Spleen (tissue), 13 donors: ENCODE measurements at regions of chr2 and their contacts with region 1.

Region 1: DNA sequence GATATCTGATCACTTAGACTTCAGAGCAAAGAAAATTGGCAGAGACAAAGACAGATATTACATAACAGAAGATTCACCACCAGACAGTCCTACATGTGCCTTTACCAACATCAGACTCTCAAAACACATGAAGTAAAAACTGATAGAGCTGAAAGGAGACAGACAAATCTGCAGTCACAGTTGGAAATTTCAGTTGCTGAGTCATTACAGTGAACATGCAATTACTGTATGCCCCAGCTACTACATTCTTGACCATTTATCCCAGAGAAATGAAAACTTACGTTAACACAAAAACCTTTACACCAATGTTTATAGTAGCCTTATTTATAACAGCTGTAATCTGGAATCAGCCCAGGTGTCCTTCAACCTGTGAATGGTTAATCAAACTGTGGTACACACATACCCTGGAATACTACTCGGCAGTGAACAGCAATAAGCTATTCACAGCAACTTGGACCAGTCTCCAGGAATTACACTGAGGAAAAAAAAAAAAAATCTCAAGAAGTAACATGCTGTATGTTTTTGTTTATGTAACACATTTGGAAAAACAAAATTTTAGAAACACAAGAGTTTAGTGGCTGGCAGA is 7.5 kb upstream of the SCLY start:
- DNase-seq: no peak
- H3K4me3 ChIP-seq: no peak overlapping the region
- H3K27ac ChIP-seq: no peak overlapping the region
- H3K4me1 ChIP-seq: no peaks in the 10 kb centered on the region
- H3K27me3 ChIP-seq: peaks cover 0 to 23% (median 0%) of the 10 kb centered on the region in 7 donors
- CTCF ChIP-seq: no peak
- POLR2A ChIP-seq: no peak

Region 2: DNA sequence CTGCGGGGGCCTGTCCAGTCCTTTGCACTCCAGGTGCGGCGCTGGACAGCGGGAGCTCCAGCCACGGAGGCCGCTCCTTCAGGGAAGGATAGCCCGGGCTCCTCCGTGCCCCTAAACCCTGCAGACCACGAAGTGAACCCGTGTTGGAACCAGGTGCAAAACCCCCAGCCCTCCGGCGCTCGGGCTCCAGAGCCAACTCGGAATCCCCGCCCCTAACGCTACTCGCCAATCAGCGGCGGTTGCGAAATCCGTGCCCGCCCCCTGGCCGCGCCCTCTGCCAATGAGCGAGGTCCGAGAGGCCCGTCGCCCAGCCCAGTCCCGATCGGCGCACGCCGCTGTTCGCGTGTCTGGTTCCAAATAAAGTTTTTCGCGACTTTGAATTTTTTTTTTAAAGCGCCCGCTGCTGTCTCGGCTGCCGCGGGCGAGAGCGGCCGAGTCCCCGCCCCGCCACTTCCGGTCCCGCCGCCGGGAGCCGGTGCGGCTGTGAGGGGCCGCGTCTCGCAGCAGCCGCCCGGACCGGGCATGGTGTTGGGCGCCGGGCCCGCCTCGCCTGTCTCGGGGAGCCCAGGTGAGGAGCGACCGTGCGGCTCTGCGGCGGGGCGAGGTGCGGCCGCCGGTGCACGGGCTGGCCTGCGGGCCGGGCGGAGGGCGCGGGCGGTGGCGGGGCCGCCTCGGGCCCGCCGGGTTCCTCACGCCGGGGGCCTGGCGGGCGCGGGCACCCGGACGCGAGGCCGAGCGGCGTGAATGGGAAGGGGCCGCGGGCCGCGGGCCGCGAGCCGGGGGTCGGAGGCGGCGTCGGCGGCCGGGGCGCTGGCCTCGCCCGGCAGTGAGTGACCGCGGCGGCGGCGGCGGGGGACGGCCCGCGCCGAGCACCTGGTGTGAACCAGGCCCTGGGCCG is 86.5 kb before region 1 on chr2 and contains the start of gene UBE2F:
- intact Hi-C with region 1: loop called (anchors 10 kb)
- DNase-seq: peak; percentile 99
- H3K4me3 ChIP-seq: peak within 1 kb of the TSS; percentile 56 to 96 (median 76)
- H3K27ac ChIP-seq: peak within 1 kb of the TSS; percentile 28 to 91 (median 78)
- H3K4me1 ChIP-seq: peaks cover 22 to 55% (median 42%) of the 10 kb centered on the region in 6 donors
- H3K27me3 ChIP-seq: no peaks in the 10 kb centered on the region
- CTCF ChIP-seq: peak in 3 of 11 experiments; percentile 5 to 38 (median 23)
- POLR2A ChIP-seq: peak in 2 of 3 donors; percentile 39 to 67
- total RNA-seq, gene UBE2F: 32.1 to 73.9 (median 48.9) TPM

Region 3: DNA sequence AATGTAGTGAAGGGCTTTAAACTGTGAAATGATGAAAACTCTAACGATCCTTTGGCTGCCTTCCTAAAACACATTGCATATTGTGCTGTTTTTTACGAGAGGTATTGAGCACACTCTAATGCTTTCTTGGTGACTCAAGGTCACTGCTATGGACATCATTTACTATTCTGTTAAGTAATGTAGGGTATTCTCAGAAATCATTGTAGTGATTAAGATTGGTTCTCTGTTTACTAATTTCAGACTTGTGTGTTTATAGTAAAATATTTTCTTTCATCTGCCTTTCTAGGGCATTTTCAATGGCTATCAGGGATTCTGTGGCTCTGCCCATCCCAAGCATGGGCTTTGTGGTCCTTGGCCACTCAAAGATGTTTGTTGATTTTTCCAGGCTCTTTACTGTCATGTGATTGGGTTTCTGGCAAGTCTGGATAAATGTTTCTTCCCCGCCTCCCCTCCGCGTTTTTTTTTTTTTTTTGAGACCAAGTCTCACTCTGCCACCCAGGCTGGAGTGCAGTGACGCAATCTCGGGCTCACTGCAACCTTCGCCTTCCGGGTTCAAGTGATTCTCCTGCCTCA is 57.2 kb before region 1 on chr2:
- intact Hi-C with region 1: no loop called
- DNase-seq: no peak
- H3K4me3 ChIP-seq: no peak overlapping the region
- H3K27ac ChIP-seq: no peak overlapping the region
- H3K4me1 ChIP-seq: peaks cover 0 to 22% (median 0%) of the 10 kb centered on the region in 6 donors
- H3K27me3 ChIP-seq: no peaks in the 10 kb centered on the region
- CTCF ChIP-seq: no peak
- POLR2A ChIP-seq: no peak